ENCODE measurements at regions of chr11 and their contacts with region 1.

Region 1: DNA sequence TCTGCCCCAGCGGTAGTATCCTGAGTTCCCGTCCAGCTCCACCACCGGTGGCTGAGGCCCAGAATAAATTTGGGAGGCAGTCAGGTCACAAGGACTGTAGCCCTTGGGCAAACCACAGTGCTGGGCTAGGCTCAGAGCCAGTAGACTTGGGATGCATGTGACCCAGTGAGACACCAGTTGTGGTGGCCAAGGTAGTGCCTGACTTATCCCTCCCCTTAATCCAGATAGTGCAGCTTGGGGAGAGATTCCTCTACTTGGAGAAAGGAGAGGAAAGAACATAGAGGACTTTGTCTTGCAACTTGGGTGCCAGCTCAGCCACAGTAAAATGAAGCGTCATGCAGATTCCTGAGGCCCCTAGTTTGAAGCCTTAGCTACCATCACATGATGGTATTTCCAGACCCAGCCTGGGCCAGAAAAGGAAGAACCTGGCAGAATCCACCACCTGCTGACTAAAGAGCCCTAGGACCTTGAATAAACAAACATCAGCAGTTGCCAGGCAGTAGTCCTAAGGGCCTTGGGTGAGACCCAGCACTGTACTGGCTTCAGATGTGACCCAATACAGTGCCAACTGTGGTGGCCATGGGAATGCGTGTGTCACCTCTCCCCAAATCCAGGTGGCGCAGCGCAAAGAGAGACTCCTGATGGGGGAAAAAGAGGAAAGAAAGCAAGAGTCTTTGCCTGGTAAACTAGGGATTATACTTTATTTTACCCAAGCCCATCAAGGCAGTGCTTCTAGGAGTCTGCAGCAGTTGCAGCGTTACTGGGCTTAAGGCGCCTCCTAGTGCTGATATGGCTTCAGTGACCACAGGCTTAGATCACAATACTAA is 17.0 kb upstream of the DDX10 start:
- DNase-seq: peak; percentile 58 to 65 (median 63)
- H3K4me3 ChIP-seq: no peak overlapping the region
- H3K4me3 Mint-ChIP-seq: no peak overlapping the region
- H3K27ac ChIP-seq: no peak overlapping the region
- H3K27ac Mint-ChIP-seq: no peak overlapping the region
- H3K4me1 ChIP-seq: no peaks in the 10 kb centered on the region
- H3K4me1 Mint-ChIP-seq: no peaks in the 10 kb centered on the region
- H3K27me3 ChIP-seq: no peaks in the 10 kb centered on the region
- H3K27me3 Mint-ChIP-seq: peaks cover 1 to 2% of the 10 kb centered on the region in 2 donors

Region 2: GRCh38 chr11:107999759-108000455 is 648.0 kb before region 1 on chr11:
- CTCF ChIA-PET with region 1: no interaction called
- POLR2A ChIA-PET with region 1: no interaction called
- intact Hi-C with region 1: loop called (anchors 1 kb)
- DNase-seq: peak in 4 of 5 donors; percentile 19 to 31 (median 22)
- H3K4me3 ChIP-seq: no peak overlapping the region
- H3K4me3 Mint-ChIP-seq: no peak overlapping the region
- H3K27ac ChIP-seq: no peak overlapping the region
- H3K27ac Mint-ChIP-seq: no peak overlapping the region
- H3K4me1 ChIP-seq: no peaks in the 10 kb centered on the region
- H3K4me1 Mint-ChIP-seq: peaks cover 0 to 2% (median 0%) of the 10 kb centered on the region in 4 donors
- H3K27me3 ChIP-seq: no peaks in the 10 kb centered on the region
- H3K27me3 Mint-ChIP-seq: peaks cover 6 to 11% of the 10 kb centered on the region in 2 donors

Region 3: DNA sequence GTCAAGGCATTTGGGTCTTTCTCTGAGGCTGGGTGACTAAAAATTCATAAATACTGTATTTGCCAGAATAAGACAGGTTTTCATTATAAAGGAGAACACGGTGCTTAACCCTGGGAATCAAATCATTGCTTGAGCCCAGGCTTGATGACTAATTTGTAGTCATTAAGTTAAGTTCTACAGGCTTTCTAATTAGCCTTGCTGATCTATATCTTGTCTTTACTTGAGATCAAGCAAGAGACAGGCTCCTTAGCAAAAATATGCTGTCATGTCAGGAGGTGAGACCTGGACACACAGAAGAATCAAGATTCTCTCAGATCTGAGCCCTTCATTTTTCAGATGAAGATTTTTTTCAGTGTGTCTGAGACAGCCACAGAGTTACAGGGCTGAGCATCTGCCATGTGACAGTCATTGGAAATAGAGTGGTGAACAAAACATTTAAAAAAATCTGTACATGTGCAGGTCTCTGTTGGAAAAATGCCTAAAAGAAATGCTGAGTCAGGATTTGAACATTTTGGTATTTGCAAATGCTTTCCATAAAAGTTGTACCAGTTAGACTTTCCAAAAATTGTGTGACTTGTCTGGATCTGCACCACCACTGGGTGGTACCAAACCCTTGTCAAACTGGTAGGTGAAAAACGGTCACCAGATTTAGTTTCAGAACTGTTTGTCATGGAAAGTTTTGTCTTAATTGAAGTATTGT is 511.9 kb before region 1 on chr11:
- CTCF ChIA-PET with region 1: no interaction called
- POLR2A ChIA-PET with region 1: no interaction called
- intact Hi-C with region 1: loop called (anchors 1 kb)
- DNase-seq: peak in 2 of 5 donors; percentile 24 to 41
- H3K4me3 ChIP-seq: no peak overlapping the region
- H3K4me3 Mint-ChIP-seq: no peak overlapping the region
- H3K27ac ChIP-seq: no peak overlapping the region
- H3K27ac Mint-ChIP-seq: peak overlapping the region in 4 of 7 donors; percentile 40 to 75 (median 46)
- H3K4me1 ChIP-seq: peaks cover 3% of the 10 kb centered on the region
- H3K4me1 Mint-ChIP-seq: peaks cover 0 to 25% (median 8%) of the 10 kb centered on the region in 4 donors
- H3K27me3 ChIP-seq: no peaks in the 10 kb centered on the region
- H3K27me3 Mint-ChIP-seq: no peaks in the 10 kb centered on the region

Region 4: GRCh38 chr11:108340970-108341369 is 306.9 kb before region 1 on chr11:
- CTCF ChIA-PET with region 1: no interaction called
- POLR2A ChIA-PET with region 1: no interaction called
- intact Hi-C with region 1: loop called (anchors 5 kb)
- DNase-seq: no peak
- H3K4me3 ChIP-seq: no peak overlapping the region
- H3K4me3 Mint-ChIP-seq: no peak overlapping the region
- H3K27ac ChIP-seq: no peak overlapping the region
- H3K27ac Mint-ChIP-seq: peak overlapping the region in 5 of 7 donors; percentile 7 to 59 (median 45)
- H3K4me1 ChIP-seq: no peaks in the 10 kb centered on the region
- H3K4me1 Mint-ChIP-seq: peaks cover 5 to 15% (median 12%) of the 10 kb centered on the region in 4 donors
- H3K27me3 ChIP-seq: no peaks in the 10 kb centered on the region
- H3K27me3 Mint-ChIP-seq: no peaks in the 10 kb centered on the region

Region 5: DNA sequence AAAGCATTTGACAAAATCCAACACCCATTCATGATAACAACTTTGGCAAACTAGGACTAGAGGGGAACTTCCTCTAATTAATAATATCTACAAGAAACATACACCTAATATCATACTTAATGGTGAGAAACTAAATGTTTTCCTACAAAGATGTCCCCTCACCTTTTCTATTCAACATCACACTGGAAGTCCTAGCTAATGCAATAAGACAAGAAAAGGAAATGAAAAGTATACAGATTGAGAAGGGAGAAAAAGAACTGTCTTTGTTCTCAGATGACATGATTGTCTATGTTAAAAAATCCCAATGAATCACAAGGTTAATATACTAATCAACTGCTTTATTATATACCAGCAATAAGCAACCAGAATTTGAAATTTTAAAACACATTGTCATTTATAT is 233.0 kb before region 1 on chr11:
- CTCF ChIA-PET with region 1: interaction called, 10 read pairs
- POLR2A ChIA-PET with region 1: no interaction called
- intact Hi-C with region 1: loop called (anchors 1 kb)
- DNase-seq: no peak
- H3K4me3 ChIP-seq: no peak overlapping the region
- H3K4me3 Mint-ChIP-seq: no peak overlapping the region
- H3K27ac ChIP-seq: no peak overlapping the region
- H3K27ac Mint-ChIP-seq: no peak overlapping the region
- H3K4me1 ChIP-seq: no peaks in the 10 kb centered on the region
- H3K4me1 Mint-ChIP-seq: peaks cover 0 to 3% (median 0%) of the 10 kb centered on the region in 4 donors
- H3K27me3 ChIP-seq: no peaks in the 10 kb centered on the region
- H3K27me3 Mint-ChIP-seq: no peaks in the 10 kb centered on the region

Region 6: DNA sequence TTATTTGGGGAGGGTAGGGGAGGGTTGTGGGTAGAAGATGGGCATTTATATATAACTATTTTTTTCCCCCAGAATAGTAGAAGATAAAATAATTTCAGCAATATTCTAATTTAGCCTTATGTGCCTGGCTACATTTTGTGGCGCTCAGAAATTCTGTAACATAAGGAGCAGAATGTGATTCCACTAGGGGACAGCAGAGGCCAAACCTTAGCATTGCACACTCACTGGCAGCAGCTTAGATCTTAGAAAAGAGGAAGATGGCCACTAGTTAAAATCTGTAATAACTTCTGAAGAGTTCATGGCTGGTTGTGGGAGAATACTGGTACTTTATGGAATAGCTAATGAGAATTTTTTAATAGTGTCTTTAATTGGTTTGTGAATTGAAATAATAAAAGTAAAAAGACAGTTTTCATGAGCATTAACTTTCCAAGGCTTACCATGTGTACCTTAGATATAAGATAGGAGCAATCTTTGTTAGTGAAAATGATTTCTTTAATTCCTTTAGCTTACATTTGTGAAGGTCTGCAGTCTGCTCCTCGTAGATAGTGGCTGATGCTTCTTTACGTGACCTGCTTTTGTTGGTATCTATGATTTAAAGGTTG is 50.1 kb after region 1 on chr11:
- CTCF ChIA-PET with region 1: no interaction called
- POLR2A ChIA-PET with region 1: no interaction called
- intact Hi-C with region 1: no loop called
- DNase-seq: peak in 3 of 5 donors; percentile 3 to 12 (median 6)
- H3K4me3 ChIP-seq: no peak overlapping the region
- H3K4me3 Mint-ChIP-seq: no peak overlapping the region
- H3K27ac ChIP-seq: no peak overlapping the region
- H3K27ac Mint-ChIP-seq: no peak overlapping the region
- H3K4me1 ChIP-seq: no peaks in the 10 kb centered on the region
- H3K4me1 Mint-ChIP-seq: peaks cover 0 to 1% (median 0%) of the 10 kb centered on the region in 4 donors
- H3K27me3 ChIP-seq: no peaks in the 10 kb centered on the region
- H3K27me3 Mint-ChIP-seq: no peaks in the 10 kb centered on the region